Caco-2 (cell line): ENCODE measurements at regions of chr17 and their contacts with region 1.

Region 1: GRCh38 chr17:48724251-48725003 is 1.4 kb downstream of the PRAC2 start:
- DNase-seq: peak; percentile 91 to 94
- H3K4me3 ChIP-seq: no peak overlapping the region
- H3K4me3 Mint-ChIP-seq: no peak overlapping the region
- H3K27ac Mint-ChIP-seq: no peak overlapping the region
- H3K4me1 ChIP-seq: peaks cover 26% of the 10 kb centered on the region
- H3K4me1 Mint-ChIP-seq: peaks cover 2% of the 10 kb centered on the region
- H3K27me3 ChIP-seq: no peaks in the 10 kb centered on the region
- H3K27me3 Mint-ChIP-seq: no peaks in the 10 kb centered on the region
- CTCF ChIP-seq: peak; percentile 97 to 98

Region 2: GRCh38 chr17:47649153-47649971 is 1075.1 kb before region 1 on chr17 and contains the start of gene KPNB1:
- CTCF ChIA-PET with region 1: no interaction called
- POLR2A ChIA-PET with region 1: interaction called, 11 read pairs
- intact Hi-C with region 1: no loop called
- DNase-seq: peak; percentile 100
- H3K4me3 ChIP-seq: peak within 1 kb of the TSS; percentile 92
- H3K4me3 Mint-ChIP-seq: peak within 1 kb of the TSS; percentile 87
- H3K27ac Mint-ChIP-seq: peak within 1 kb of the TSS; percentile 83
- H3K4me1 ChIP-seq: peaks cover 29% of the 10 kb centered on the region
- H3K4me1 Mint-ChIP-seq: peaks cover 27% of the 10 kb centered on the region
- H3K27me3 ChIP-seq: no peaks in the 10 kb centered on the region
- H3K27me3 Mint-ChIP-seq: no peaks in the 10 kb centered on the region
- CTCF ChIP-seq: peak in 1 of 2 experiments; percentile 2
- total RNA-seq, gene KPNB1: 967 and 1,072 TPM in 2 replicates

Region 3: DNA sequence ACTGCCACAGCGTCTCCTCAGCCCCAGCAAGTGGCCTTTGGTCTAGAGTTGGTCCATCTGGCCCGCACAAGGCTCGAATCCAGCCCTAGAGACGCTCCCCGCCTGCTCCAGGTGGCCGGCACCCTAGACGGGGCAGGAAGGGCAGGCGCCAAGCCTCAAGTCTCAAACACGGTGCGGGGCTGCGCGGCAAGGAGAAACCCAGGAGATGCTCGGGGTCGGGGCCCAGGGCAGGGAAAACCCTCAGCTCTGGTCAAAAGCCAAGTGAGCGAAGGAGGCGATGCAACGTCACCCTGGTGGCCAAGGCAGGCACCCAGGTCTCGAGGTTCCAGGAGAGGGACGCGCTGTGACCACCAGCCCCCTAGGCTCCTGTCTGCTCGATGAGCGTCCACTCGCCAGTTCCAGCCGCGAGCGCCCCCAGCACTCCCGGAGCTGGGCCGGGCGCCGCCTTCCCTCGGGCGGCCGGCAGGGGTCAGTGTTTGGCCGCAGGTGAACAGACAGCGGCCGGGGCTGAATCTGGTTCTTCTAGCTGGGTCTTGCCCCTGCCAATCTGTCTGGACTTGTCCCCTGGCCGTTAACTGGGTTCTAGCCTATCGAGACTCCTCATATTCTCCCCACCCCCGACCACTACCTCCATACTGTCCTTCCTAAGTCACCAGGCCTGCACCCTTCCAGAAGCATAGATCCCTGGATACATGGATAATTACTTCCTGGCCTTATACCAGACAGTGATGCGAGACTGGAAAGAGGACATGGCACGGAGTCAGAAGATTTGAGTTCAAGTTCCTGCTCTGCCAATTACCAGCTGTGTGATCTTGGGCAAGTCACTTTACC is 46.1 kb before region 1 on chr17:
- CTCF ChIA-PET with region 1: interaction called, 16 read pairs
- POLR2A ChIA-PET with region 1: no interaction called
- intact Hi-C with region 1: no loop called
- DNase-seq: peak; percentile 69 to 87
- H3K4me3 ChIP-seq: no peak overlapping the region
- H3K4me3 Mint-ChIP-seq: no peak overlapping the region
- H3K27ac Mint-ChIP-seq: no peak overlapping the region
- H3K4me1 ChIP-seq: no peaks in the 10 kb centered on the region
- H3K4me1 Mint-ChIP-seq: no peaks in the 10 kb centered on the region
- H3K27me3 ChIP-seq: no peaks in the 10 kb centered on the region
- H3K27me3 Mint-ChIP-seq: peaks cover 8% of the 10 kb centered on the region
- CTCF ChIP-seq: peak; percentile 99

Region 4: GRCh38 chr17:48747445-48748363 is 23.3 kb after region 1 on chr17:
- CTCF ChIA-PET with region 1: interaction called, 13 read pairs
- POLR2A ChIA-PET with region 1: interaction called, 4 read pairs
- intact Hi-C with region 1: no loop called
- DNase-seq: no peak
- H3K4me3 ChIP-seq: no peak overlapping the region
- H3K4me3 Mint-ChIP-seq: no peak overlapping the region
- H3K27ac Mint-ChIP-seq: no peak overlapping the region
- H3K4me1 ChIP-seq: peaks cover 9% of the 10 kb centered on the region
- H3K4me1 Mint-ChIP-seq: peaks cover 20% of the 10 kb centered on the region
- H3K27me3 ChIP-seq: peaks cover 1% of the 10 kb centered on the region; the same call in 1 of the 2 replicates
- H3K27me3 Mint-ChIP-seq: peaks cover 16% of the 10 kb centered on the region
- CTCF ChIP-seq: no peak

Region 5: DNA sequence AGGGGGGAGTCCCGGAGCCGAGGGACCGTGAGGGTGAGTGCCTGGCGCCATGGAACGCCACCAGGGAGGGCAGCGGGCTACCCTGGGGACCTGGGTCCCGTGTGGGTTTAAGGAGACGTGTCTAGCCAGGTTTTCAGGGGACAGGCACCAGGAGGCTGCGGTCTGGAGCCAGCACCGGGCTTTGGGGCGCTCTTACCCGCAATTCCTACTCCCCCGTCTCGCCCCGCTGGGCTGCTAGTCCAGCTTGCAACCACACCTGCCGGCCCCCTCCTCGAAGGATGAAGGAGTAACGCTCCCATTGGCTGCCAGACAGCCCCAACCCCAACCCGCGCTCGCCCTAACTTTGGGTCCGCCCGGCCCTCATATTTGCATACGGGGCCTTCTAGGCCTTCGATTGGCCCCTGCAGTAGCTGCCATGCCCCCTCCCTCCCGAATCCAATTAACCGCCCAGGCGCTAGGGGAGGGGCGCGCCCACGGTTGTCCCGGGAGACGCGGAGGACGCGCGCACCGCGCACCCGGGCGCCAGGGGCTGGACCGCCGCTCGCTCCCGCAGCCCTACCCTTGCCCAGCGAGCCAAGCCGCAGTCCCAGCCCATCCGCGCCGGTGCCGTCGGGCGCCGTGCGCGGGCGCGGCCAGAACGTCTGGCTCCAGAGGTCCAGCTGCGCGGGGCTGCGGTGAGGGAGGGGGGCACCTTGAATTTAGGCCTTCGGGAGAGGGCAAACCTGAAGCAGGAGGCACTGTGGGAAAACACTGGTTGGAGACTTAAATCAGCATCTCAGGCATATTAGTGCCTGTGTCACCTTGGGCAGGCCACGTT is 92.6 kb after region 1 on chr17 and contains the start of gene TTLL6:
- CTCF ChIA-PET with region 1: interaction called, 16 read pairs
- POLR2A ChIA-PET with region 1: no interaction called
- intact Hi-C with region 1: no loop called
- DNase-seq: peak; percentile 99 to 100
- H3K4me3 ChIP-seq: peak within 1 kb of the TSS; percentile 54
- H3K4me3 Mint-ChIP-seq: peak within 1 kb of the TSS; percentile 75
- H3K27ac Mint-ChIP-seq: no peak within 1 kb of the TSS
- H3K4me1 ChIP-seq: peaks cover 10% of the 10 kb centered on the region
- H3K4me1 Mint-ChIP-seq: peaks cover 8% of the 10 kb centered on the region
- H3K27me3 ChIP-seq: no peaks in the 10 kb centered on the region
- H3K27me3 Mint-ChIP-seq: peaks cover 2% of the 10 kb centered on the region
- CTCF ChIP-seq: peak in 1 of 2 experiments; percentile 17
- total RNA-seq, gene TTLL6: 0.16 and 0.81 TPM in 2 replicates

Region 6: DNA sequence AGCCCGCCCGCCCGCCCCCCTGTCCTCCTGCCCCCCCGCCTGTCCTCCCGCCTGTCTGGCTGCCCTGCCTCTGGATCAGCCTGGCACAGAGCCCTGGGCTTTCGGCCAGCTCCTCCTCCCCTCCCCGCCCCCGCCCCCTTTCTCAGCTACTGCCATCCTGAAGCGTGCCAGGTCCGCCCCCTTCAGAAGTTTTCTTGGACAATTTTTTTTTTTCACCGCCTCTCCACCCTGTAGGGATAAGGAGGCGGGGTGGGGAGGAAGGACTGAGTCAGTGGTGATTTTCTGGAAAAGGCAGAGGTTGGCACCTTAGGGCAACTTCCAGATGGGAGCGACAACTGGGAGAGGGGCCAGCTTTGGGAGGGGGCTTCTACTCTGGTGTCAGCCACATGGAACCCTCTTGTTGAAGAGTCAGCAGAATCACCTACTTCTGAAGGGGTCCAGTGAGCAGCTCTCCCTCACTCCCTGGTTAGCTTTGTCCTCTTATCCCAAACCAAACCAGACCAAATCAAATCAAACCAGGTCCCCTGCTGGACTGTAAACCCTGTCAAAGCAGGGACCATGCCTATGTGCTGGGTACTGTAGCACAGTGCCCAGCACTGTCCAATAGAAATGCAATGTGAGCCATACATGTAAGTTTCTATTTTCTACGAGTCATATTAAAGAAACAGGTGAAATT is 292.5 kb after region 1 on chr17:
- CTCF ChIA-PET with region 1: no interaction called
- POLR2A ChIA-PET with region 1: no interaction called
- intact Hi-C with region 1: no loop called
- DNase-seq: peak in 1 of 2 experiments; percentile 40
- H3K4me3 ChIP-seq: no peak overlapping the region
- H3K4me3 Mint-ChIP-seq: peak overlapping the region; percentile 37
- H3K27ac Mint-ChIP-seq: peak overlapping the region; percentile 85
- H3K4me1 ChIP-seq: peaks cover 86% of the 10 kb centered on the region
- H3K4me1 Mint-ChIP-seq: peaks cover 73% of the 10 kb centered on the region
- H3K27me3 ChIP-seq: no peaks in the 10 kb centered on the region
- H3K27me3 Mint-ChIP-seq: no peaks in the 10 kb centered on the region
- CTCF ChIP-seq: no peak